Activated CD4-positive, alpha-beta T cell treated with anti-CD3 and anti-CD28 coated beads, Interleukin-2, amount 10 ng/mL, durations not matched to agents 24 days and 14 days (primary cell): ENCODE measurements at regions of chr11 and their contacts with region 1.

Region 1: DNA sequence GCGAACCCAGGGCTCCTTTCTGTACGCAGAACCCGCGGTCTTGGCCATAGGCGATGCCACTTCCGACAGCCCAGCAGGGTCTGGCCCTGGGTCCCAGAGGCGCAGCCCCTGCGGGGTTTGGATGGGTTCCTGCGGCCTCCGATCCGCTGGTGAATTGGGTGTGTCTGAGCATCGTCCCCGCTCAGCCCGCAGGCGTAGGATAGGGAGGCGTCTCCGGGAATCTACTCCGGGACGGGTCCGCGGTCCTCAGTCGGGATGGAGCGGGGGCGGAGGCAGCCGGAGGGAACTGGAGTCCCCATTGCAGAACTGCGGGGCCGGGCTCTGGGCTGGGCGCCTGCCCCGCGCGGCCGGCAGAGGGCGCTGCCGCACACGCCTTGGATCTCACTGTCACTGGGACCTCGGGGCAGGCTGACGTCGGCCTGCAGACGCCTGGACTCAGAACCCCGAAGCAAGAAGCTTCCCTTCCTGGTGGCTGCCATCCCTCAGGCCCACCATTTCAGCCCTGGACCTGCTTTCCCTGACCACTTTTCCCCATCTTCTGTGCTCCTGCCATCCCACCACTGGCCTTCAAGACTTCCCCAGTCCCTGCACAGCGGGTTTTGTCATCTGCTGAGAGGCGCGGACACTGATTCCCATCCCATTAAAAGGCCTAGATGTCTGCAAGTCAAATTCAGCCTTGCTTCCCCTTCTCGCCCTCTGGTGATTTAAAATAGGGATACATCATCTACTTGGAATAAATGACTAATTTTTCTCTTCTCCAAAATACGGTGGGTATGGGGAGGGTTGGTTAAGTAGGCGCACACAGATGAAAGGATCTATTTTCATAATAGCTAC is 38.3 kb upstream of the CREB3L1 start:
- DNase-seq: peak; percentile 96
- H3K4me3 Mint-ChIP-seq: peak overlapping the region; percentile 75
- H3K27ac Mint-ChIP-seq: peak overlapping the region; percentile 32
- H3K4me1 Mint-ChIP-seq: peaks cover 41% of the 10 kb centered on the region
- H3K27me3 Mint-ChIP-seq: peaks cover 22% of the 10 kb centered on the region

Region 2: GRCh38 chr11:46200537-46201281 is 38.5 kb before region 1 on chr11:
- intact Hi-C with region 1: no loop called
- DNase-seq: no peak
- H3K4me3 Mint-ChIP-seq: no peak overlapping the region
- H3K27ac Mint-ChIP-seq: no peak overlapping the region
- H3K4me1 Mint-ChIP-seq: no peaks in the 10 kb centered on the region
- H3K27me3 Mint-ChIP-seq: peaks cover 36% of the 10 kb centered on the region

Region 3: GRCh38 chr11:46308631-46309419 is 69.6 kb after region 1 on chr11:
- intact Hi-C with region 1: loop called (anchors 1 kb)
- DNase-seq: peak; percentile 90
- H3K4me3 Mint-ChIP-seq: no peak overlapping the region
- H3K27ac Mint-ChIP-seq: no peak overlapping the region
- H3K4me1 Mint-ChIP-seq: peaks cover 9% of the 10 kb centered on the region
- H3K27me3 Mint-ChIP-seq: peaks cover 2% of the 10 kb centered on the region

Region 4: GRCh38 chr11:46315033-46315738 is 76.0 kb after region 1 on chr11:
- intact Hi-C with region 1: loop called (anchors 1 kb)
- DNase-seq: peak; percentile 93
- H3K4me3 Mint-ChIP-seq: no peak overlapping the region
- H3K27ac Mint-ChIP-seq: no peak overlapping the region
- H3K4me1 Mint-ChIP-seq: peaks cover 14% of the 10 kb centered on the region
- H3K27me3 Mint-ChIP-seq: no peaks in the 10 kb centered on the region

Region 5: DNA sequence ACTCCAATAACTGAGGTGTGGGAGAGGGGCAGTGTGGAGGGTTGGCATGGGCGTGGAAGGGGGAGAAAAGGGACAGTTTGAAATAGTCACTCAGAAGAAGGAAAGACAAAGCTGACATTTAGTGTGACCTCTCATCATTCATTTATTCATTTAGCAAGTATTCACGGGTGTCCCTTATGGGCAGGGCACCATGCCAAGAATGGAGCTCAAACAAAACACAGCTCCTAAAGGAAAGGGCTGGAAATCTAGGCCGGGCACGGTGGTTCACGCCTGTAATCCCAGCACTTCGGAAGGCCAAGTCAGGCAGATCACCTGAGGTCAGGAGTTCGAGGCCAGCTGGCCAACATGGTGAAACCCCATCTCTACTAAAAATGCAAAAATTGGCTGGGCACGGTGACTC is 88.6 kb after region 1 on chr11:
- intact Hi-C with region 1: no loop called
- DNase-seq: no peak
- H3K4me3 Mint-ChIP-seq: no peak overlapping the region
- H3K27ac Mint-ChIP-seq: no peak overlapping the region
- H3K4me1 Mint-ChIP-seq: peaks cover 24% of the 10 kb centered on the region
- H3K27me3 Mint-ChIP-seq: peaks cover 46% of the 10 kb centered on the region

Region 6: GRCh38 chr11:46367244-46367915 is 128.2 kb after region 1 on chr11:
- intact Hi-C with region 1: loop called (anchors 5 kb)
- DNase-seq: peak; percentile 92
- H3K4me3 Mint-ChIP-seq: no peak overlapping the region
- H3K27ac Mint-ChIP-seq: peak overlapping the region; percentile 71
- H3K4me1 Mint-ChIP-seq: peaks cover 17% of the 10 kb centered on the region
- H3K27me3 Mint-ChIP-seq: no peaks in the 10 kb centered on the region

Region 7: GRCh38 chr11:46380340-46381047 is 141.3 kb after region 1 on chr11:
- intact Hi-C with region 1: loop called (anchors 1 kb)
- DNase-seq: peak; percentile 91
- H3K4me3 Mint-ChIP-seq: peak overlapping the region; percentile 79
- H3K27ac Mint-ChIP-seq: peak overlapping the region; percentile 80
- H3K4me1 Mint-ChIP-seq: peaks cover 9% of the 10 kb centered on the region
- H3K27me3 Mint-ChIP-seq: peaks cover 10% of the 10 kb centered on the region